Transverse colon (tissue), 4 donors: ENCODE measurements at regions of chr9 and their contacts with region 1.

Region 1: GRCh38 chr9:117151716-117152115 is 263.1 kb downstream of the ASTN2 start:
- DNase-seq: no peak
- H3K4me3 ChIP-seq: no peak overlapping the region
- H3K27ac ChIP-seq: no peak overlapping the region
- H3K4me1 ChIP-seq: no peaks in the 10 kb centered on the region
- H3K27me3 ChIP-seq: no peaks in the 10 kb centered on the region
- CTCF ChIP-seq: no peak
- EP300 ChIP-seq: no peak
- POLR2A ChIP-seq: no peak

Region 2: DNA sequence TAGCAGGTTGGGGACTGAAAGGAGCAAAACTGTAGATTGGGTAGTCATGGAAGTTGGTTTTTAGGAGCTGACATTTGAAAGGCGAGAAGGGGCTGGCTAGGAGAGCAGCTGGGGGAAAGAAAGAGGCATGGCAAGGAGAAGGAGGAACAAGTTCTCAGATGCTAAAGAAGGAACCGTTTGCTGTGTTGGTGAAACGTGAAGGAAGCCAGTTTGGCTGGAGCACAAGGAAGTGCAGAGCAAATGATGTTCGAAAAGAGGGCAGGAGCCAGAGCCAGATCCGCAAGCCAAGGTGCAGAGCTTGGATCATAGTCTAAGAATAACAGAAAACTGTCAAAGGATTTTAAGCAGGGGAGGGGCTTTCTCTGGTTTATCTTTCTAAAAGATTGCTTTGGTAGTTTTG is 13.5 kb before region 1 on chr9:
- in situ Hi-C with region 1: no loop called
- intact Hi-C with region 1: loop called (anchors 1 kb)
- DNase-seq: no peak
- H3K4me3 ChIP-seq: no peak overlapping the region
- H3K27ac ChIP-seq: no peak overlapping the region
- H3K4me1 ChIP-seq: no peaks in the 10 kb centered on the region
- H3K27me3 ChIP-seq: no peaks in the 10 kb centered on the region
- CTCF ChIP-seq: no peak
- EP300 ChIP-seq: no peak
- POLR2A ChIP-seq: no peak